ENCODE measurements at regions of chr1 and their contacts with region 1.

Region 1: GRCh38 chr1:1435106-1435903 is at the start of gene VWA1:
- DNase-seq: peak; percentile 58 to 77 (median 71)
- H3K4me3 ChIP-seq: peak within 1 kb of the TSS; percentile 19 to 78 (median 51)
- H3K27ac ChIP-seq: peak within 1 kb of the TSS in 1 of 2 experiments; percentile 40
- H3K4me1 ChIP-seq: peaks cover 0 to 80% (median 57%) of the 10 kb centered on the region in 4 experiments
- H3K27me3 ChIP-seq: peaks cover 0 to 3% (median 0%) of the 10 kb centered on the region in 5 experiments

Region 2: GRCh38 chr1:1399187-1399871 is 36.0 kb before region 1 on chr1 and contains the start of gene CCNL2:
- CTCF ChIA-PET with region 1: interaction called, 11 read pairs
- POLR2A ChIA-PET with region 1: interaction called, 3 read pairs
- DNase-seq: peak; percentile 99
- H3K4me3 ChIP-seq: peak within 1 kb of the TSS; percentile 86 to 97 (median 92)
- H3K27ac ChIP-seq: peak within 1 kb of the TSS; percentile 79 to 91
- H3K4me1 ChIP-seq: peaks cover 0 to 33% (median 30%) of the 10 kb centered on the region in 4 experiments
- H3K27me3 ChIP-seq: no peaks in the 10 kb centered on the region

Region 3: GRCh38 chr1:1406817-1407635 is 28.3 kb before region 1 on chr1 and contains the start of gene MRPL20:
- CTCF ChIA-PET with region 1: interaction called, 17 read pairs
- POLR2A ChIA-PET with region 1: no interaction called
- DNase-seq: peak; percentile 93 to 95 (median 95)
- H3K4me3 ChIP-seq: peak within 1 kb of the TSS; percentile 69 to 97 (median 87)
- H3K27ac ChIP-seq: peak within 1 kb of the TSS; percentile 75 to 93
- H3K4me1 ChIP-seq: peaks cover 6 to 26% (median 19%) of the 10 kb centered on the region in 4 experiments
- H3K27me3 ChIP-seq: no peaks in the 10 kb centered on the region

Region 4: DNA sequence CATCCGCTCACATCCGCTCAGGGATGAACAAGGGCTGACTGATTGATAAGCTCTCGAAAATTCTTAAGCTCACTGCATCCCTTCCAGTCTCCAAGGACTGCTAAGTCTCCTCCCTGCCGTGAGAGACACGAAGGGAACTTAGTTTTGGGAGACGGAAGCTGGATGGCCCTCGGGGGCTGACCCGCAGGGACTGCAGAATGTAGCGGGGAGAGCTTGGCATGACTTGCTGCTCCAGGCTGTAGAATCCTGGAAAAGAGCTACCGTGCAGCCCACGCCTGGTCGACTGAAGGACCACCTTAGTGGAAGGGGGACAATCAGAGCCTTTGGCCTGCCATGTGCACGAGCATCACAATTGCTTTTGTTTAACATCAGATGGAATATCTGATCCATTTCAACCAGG is 19.6 kb before region 1 on chr1:
- CTCF ChIA-PET with region 1: interaction called, 11 read pairs
- POLR2A ChIA-PET with region 1: interaction called, 3 read pairs
- DNase-seq: no peak
- H3K4me3 ChIP-seq: no peak overlapping the region
- H3K27ac ChIP-seq: no peak overlapping the region
- H3K4me1 ChIP-seq: peaks cover 0 to 10% (median 4%) of the 10 kb centered on the region in 4 experiments
- H3K27me3 ChIP-seq: peaks cover 0 to 11% (median 0%) of the 10 kb centered on the region in 5 experiments

Region 5: DNA sequence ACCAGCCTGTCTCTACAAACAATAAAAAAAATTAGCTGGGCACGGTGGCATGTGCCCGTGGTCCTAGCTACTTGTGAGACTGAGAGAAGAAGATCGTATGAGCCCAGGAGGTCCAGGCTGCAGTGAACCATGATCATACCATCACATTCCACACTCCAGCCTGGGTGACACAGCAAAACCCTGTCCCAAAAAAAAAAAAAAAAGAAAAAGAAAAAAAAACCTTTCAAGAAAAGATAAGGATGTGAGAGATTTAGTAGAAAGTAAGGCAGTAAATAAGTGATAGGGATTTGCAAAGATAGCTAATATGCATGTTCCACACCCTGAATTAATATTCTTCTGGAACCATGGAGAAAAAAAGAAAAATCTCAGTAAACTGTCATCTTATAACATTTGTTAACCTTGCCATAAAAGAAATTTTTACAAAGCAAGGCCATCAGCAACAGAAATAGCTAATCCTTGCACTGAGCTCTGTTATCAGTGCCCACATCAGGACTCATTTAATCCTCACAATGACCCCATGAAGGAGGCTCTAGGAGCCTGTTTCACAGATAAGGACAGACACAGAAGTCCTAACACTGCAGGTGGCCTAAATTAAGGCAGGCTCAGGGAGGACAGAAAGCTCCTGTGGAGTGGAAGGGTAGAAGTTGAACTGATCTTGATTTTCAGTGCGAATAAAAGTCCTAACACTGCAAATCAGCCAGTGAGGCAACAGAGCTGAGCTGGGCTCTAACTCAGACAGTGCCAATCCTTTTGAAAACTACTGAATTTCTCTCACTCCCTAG is 448.0 kb after region 1 on chr1:
- CTCF ChIA-PET with region 1: no interaction called
- POLR2A ChIA-PET with region 1: no interaction called
- DNase-seq: no peak
- H3K4me3 ChIP-seq: no peak overlapping the region
- H3K27ac ChIP-seq: no peak overlapping the region
- H3K4me1 ChIP-seq: peaks cover 6 to 37% (median 11%) of the 10 kb centered on the region in 4 experiments
- H3K27me3 ChIP-seq: no peaks in the 10 kb centered on the region